ENCODE measurements at regions of chr2 and their contacts with region 1.

Region 1: GRCh38 chr2:1546023-1546591 is 132.8 kb downstream of the TPO start:
- DNase-seq: peak in 2 of 6 donors; percentile 17 to 63
- ATAC-seq: peak; percentile 63 to 82 (median 76)
- H3K4me3 ChIP-seq: no peak overlapping the region
- H3K27ac ChIP-seq: no peak overlapping the region
- H3K4me1 ChIP-seq: no peaks in the 10 kb centered on the region
- H3K27me3 ChIP-seq: no peaks in the 10 kb centered on the region
- CTCF ChIP-seq: peak; percentile 59 to 82 (median 71)

Region 2: DNA sequence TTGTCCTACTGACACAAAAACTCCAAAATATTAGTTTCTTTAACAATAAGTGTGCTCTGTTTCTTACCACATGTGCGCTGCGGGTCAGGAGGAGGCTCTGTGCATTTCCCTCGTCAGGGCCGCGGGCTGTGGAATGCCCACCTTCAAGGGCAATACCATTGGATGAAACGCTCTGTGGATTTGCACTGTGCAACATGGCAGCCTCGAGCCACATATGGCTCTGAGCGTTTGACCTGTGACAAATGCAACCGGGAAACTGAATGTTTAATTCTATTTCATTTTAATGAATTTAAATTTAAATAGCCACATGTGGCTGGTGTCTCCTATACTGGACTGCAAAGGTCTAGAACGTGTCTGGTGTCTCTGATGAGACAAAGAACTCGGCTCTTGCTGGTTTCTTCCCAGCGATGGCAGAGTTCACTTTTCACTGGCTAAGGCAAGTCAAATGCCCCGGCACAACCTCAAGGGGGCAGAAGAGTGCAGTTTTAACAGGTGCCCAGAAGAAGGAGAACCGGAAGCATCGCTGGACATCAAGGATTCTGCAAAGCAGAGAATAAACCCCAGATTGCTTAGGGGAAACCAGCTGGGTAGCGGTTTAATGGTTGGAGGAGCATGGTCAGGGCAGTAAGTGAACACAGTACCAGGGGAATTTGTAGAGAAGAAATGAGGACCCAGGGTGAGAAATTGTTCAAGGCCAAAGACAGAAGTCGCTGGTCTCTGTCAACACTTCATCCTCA is 831.9 kb before region 1 on chr2:
- intact Hi-C with region 1: loop called in 2 of 3 experiments (anchors 10 kb)
- DNase-seq: peak in 5 of 6 donors; percentile 65 to 73 (median 67)
- ATAC-seq: peak; percentile 90 to 99 (median 93)
- H3K4me3 ChIP-seq: no peak overlapping the region
- H3K27ac ChIP-seq: no peak overlapping the region
- H3K4me1 ChIP-seq: no peaks in the 10 kb centered on the region
- H3K27me3 ChIP-seq: no peaks in the 10 kb centered on the region
- CTCF ChIP-seq: peak; percentile 57 to 63 (median 60)

Region 3: DNA sequence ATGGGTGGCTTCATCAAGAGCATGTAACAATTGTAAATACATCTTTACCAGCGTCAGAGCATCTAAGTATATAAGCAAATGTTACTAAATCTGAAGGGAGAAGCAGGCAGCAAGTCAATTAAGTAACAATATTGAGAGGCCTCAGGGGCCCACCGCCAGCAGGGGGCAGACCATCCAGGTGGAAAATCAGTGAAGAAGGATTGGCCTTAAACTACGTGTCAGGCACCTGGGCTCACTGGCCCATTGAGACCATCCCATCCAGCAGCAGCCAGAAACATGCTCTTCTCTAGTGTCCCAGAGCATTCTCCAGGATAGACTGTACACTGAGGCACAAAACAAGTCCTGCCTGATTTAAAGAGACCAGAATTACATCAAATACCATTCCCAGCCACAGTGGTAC is 691.6 kb before region 1 on chr2:
- intact Hi-C with region 1: loop called in 2 of 3 experiments (anchors 5 to 10 kb)
- DNase-seq: peak in 5 of 6 donors; percentile 44 to 86 (median 69)
- ATAC-seq: peak; percentile 55 to 81 (median 74)
- H3K4me3 ChIP-seq: no peak overlapping the region
- H3K27ac ChIP-seq: no peak overlapping the region
- H3K4me1 ChIP-seq: no peaks in the 10 kb centered on the region
- H3K27me3 ChIP-seq: no peaks in the 10 kb centered on the region
- CTCF ChIP-seq: peak; percentile 44 to 66 (median 54)

Region 4: DNA sequence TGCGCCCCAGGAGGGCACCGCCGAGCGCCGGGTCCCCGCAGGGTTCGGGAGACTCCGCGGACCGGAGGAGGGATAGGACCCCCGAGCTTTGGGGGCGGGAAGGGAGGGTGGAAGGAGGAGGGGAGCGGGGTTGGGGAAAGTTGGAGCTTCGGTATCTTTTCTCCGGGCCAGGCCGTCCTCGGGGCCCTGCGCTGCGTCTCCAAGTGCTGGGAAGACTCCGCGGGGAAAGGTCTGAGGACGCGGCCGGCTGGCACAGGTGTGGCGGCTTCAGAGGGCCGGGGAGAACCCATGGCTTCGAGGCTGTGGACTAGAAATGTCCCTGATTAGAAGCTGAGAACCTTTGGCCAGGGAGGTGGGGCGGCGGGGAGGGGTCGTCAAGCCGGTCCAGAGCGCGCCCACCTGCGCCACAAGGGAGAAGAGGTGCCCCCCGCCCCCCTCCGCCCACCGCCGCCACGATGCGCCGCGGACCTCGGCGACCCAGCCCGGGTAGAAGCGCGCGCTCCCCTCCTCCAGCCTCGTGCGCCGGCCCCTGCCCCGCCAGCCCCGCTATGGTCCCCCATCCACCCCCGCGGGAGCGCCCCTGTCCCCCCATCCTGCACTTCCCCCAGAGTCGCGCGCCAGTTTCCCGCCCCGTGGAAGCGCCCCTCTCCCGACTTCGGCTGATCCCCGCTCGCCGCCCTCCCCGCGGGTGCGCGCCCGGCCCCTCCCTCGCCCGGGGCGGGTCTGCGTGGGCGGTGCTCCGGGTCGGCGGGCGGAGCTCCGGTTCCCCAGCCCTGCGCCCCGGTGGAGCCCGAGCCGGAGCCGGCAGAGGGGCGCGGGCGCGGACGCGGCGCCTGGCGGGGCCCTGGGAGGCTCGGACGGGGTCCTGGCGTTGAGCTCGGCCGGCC is 595.8 kb before region 1 on chr2 and contains the start of gene SNTG2:
- intact Hi-C with region 1: loop called in 1 of 3 experiments (anchors 10 kb)
- DNase-seq: peak; percentile 58 to 88 (median 68)
- ATAC-seq: peak; percentile 94 to 95 (median 95)
- H3K4me3 ChIP-seq: peak within 1 kb of the TSS; percentile 37 to 60 (median 45)
- H3K27ac ChIP-seq: no peak within 1 kb of the TSS
- H3K4me1 ChIP-seq: peaks cover 0 to 4% (median 0%) of the 10 kb centered on the region in 3 donors
- H3K27me3 ChIP-seq: peaks cover 0 to 5% (median 0%) of the 10 kb centered on the region in 4 donors
- CTCF ChIP-seq: no peak
- total RNA-seq, gene SNTG2: 2.2 to 19.2 (median 4.8) TPM

Region 5: DNA sequence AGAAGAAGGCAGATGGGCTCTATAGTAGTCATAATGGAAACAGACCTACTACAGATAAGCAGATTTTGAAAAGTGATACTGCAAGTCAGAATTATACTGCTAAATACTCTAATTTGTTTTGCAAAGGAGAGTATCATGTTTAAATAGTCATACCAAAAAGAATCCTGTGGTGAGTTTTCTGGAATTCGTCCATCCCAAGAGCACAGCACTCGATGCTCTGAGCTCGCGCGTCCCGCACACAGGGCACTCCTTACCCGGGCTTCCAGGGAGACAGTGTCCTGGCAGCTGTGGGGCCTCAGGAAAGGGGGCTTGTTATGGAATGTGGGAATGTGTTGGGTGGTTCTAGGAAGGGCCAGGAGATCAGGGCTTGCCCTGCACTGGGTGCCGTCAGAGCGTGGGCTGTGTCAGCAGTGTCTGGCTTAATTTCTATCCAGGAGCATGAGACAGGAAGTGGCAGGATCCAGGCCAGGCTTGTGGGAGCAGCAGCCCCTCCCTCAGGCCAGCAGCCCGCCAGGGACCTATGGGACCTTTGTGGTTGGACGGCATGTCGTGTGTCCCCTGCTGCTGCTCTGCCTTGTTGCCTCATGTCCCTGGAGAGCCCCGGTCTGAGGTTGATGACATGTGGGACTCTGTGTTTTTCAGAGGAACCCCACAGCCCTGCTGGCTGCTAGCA is 326.1 kb before region 1 on chr2:
- intact Hi-C with region 1: loop called in 1 of 3 experiments (anchors 10 kb)
- DNase-seq: no peak
- ATAC-seq: peak in 1 of 4 donors; percentile 39
- H3K4me3 ChIP-seq: no peak overlapping the region
- H3K27ac ChIP-seq: no peak overlapping the region
- H3K4me1 ChIP-seq: no peaks in the 10 kb centered on the region
- H3K27me3 ChIP-seq: no peaks in the 10 kb centered on the region
- CTCF ChIP-seq: no peak

Measured in pancreas (tissue), 10 donors.